Heart right ventricle (tissue), 16 donors: ENCODE measurements at regions of chr4 and their contacts with region 1.

Region 1: DNA sequence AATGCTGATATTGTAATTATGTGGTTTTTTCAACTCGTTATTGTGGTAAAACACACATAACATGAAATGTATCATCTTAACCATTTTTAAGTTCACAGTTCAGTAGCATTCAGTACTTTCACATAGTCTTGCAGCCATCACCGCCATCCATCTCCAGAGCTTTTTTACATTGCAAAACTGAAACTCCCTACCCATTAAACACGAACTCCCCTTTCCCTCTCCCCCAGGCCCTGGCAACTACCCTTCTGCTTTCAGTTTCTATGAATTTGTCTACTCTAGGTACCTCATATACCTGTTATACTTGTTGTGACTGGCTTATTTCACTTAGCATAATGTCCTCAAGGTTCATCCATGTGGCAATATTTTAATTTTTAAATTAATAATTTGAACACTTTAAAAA is 380.6 kb downstream of the MAPK10 start:
- DNase-seq: no peak
- ATAC-seq: no peak
- H3K4me3 ChIP-seq: no peak overlapping the region
- H3K27ac ChIP-seq: no peak overlapping the region
- H3K4me1 ChIP-seq: no peaks in the 10 kb centered on the region
- H3K27me3 ChIP-seq: no peaks in the 10 kb centered on the region
- CTCF ChIP-seq: no peak

Region 2: DNA sequence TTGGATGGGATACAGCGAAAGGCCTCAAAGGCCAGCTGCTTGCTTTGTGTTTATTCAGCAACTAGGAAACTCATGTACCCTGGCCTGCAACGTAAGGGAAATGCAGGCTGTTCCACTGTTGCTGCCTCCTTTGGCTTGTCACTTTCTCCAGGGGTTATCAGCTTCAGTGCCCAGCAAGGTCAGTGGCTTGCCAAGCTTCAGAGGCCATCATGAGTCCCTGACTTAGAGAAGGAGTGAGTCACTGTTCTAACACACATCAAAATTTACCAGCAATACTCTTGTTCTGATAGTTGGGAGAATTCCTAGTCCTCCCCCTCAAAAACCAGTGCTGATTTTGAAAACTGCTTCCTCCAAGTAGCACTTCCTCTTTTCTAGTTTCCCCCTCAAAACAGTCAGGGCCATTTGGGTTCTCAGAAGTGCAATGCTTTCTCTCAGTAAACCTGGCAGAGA is 253.5 kb before region 1 on chr4:
- intact Hi-C with region 1: no loop called
- DNase-seq: peak; percentile 46 to 58
- ATAC-seq: peak; percentile 72 to 99 (median 92)
- H3K4me3 ChIP-seq: no peak overlapping the region
- H3K27ac ChIP-seq: peak overlapping the region; percentile 32 to 90 (median 71)
- H3K4me1 ChIP-seq: peaks cover 0 to 49% (median 26%) of the 10 kb centered on the region in 9 donors
- H3K27me3 ChIP-seq: no peaks in the 10 kb centered on the region
- CTCF ChIP-seq: no peak

Region 3: GRCh38 chr4:85756938-85757337 is 222.3 kb before region 1 on chr4:
- intact Hi-C with region 1: loop called in 1 of 10 experiments (anchors 10 kb)
- DNase-seq: peak in 1 of 2 donors; percentile 61
- ATAC-seq: peak in 6 of 8 donors; percentile 38 to 84 (median 65)
- H3K4me3 ChIP-seq: no peak overlapping the region
- H3K27ac ChIP-seq: no peak overlapping the region
- H3K4me1 ChIP-seq: peaks cover 0 to 41% (median 25%) of the 10 kb centered on the region in 9 donors
- H3K27me3 ChIP-seq: no peaks in the 10 kb centered on the region
- CTCF ChIP-seq: peak in 7 of 9 donors; percentile 45 to 67 (median 53)

Region 4: GRCh38 chr4:86032476-86033022 is 53.3 kb after region 1 on chr4:
- intact Hi-C with region 1: loop called in 1 of 10 experiments (anchors 10 kb)
- DNase-seq: no peak
- ATAC-seq: peak; percentile 24 to 90 (median 76)
- H3K4me3 ChIP-seq: no peak overlapping the region
- H3K27ac ChIP-seq: peak overlapping the region; percentile 1 to 85 (median 75)
- H3K4me1 ChIP-seq: peaks cover 0 to 31% (median 18%) of the 10 kb centered on the region in 9 donors
- H3K27me3 ChIP-seq: no peaks in the 10 kb centered on the region
- CTCF ChIP-seq: no peak